Sciatic nerve (tissue), 2 donors: ENCODE measurements at regions of chr15 and their contacts with region 1.

Region 1: GRCh38 chr15:26739791-26740190 is 33.1 kb downstream of the GABRB3 start:
- DNase-seq: no peak
- ATAC-seq: no peak

Region 2: GRCh38 chr15:25933456-25934158 is 806.2 kb before region 1 on chr15:
- intact Hi-C with region 1: loop called (anchors 5 kb)
- DNase-seq: peak; percentile 75
- ATAC-seq: peak; percentile 95